ENCODE measurements at regions of chr19 and their contacts with region 1.

Region 1: GRCh38 chr19:5690125-5690954 is at the start of gene RPL36:
- DNase-seq: peak; percentile 98 to 99
- ATAC-seq: peak; percentile 70 to 79 (median 75)
- H3K4me3 ChIP-seq: peak within 1 kb of the TSS; percentile 97
- H3K27ac ChIP-seq: peak within 1 kb of the TSS; percentile 91
- H3K4me1 ChIP-seq: peaks cover 15% of the 10 kb centered on the region
- H3K27me3 ChIP-seq: no peaks in the 10 kb centered on the region
- CTCF ChIP-seq: peak; percentile 93
- total RNA-seq, gene RPL36: 440 to 572 (median 473) TPM

Region 2: GRCh38 chr19:5622463-5623396 is 67.6 kb before region 1 on chr19 and contains the starts of genes SAFB and SAFB2:
- intact Hi-C with region 1: loop called in 1 of 2 experiments (anchors 10 kb)
- DNase-seq: peak; percentile 99 to 100
- ATAC-seq: peak; percentile 94 to 96 (median 96)
- H3K4me3 ChIP-seq: peak within 1 kb of the TSS; percentile 98
- H3K27ac ChIP-seq: peak within 1 kb of the TSS; percentile 89
- H3K4me1 ChIP-seq: peaks cover 73% of the 10 kb centered on the region
- H3K27me3 ChIP-seq: no peaks in the 10 kb centered on the region
- CTCF ChIP-seq: no peak
- total RNA-seq, gene SAFB: 51.3 to 88.9 (median 65.1) TPM
- total RNA-seq, gene SAFB2: 30.4 to 52.9 (median 45.6) TPM

Region 3: DNA sequence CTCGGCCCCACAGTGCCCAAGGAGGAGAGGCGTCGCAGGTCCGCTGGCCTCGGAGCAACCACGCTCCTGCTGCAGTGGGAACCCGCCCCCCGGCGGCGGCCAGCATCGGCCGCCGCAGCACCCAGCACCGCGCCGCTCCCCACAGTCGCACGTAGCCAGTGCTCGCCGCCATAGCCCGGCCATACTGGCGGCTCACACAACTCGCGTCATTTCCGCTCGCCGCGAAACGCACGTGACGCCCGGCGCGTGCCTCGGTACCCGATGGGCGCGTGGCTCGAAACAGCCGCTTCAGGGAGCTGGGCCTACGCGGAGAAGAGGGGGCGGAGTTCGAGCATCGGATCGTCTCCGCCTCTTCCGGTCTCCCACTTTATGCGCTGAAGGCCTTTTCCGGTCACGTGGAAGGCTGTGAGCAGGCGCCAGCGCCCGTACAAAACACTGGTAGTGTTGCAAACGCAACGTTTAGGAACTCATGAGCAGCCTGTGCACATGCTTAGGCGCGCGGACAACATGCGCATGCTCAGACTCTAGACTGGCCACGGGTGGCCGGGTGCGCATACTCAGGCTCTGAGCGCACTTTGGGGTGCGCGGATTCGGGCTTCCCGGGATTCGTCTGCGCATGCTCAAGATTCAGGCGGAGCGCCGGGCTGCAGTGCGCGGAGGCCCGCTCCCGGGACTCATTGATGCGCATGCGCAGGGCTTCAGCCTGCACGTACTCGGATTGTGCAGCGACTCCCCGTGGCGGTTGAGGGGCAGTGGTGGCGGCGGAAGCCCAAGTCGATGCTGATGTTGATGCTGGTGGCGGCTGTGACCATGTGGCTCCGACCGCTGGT is 29.8 kb after region 1 on chr19 and contains the starts of genes CATSPERD and LONP1:
- intact Hi-C with region 1: loop called in 1 of 2 experiments (anchors 2 kb)
- DNase-seq: peak; percentile 99
- ATAC-seq: peak; percentile 96 to 97 (median 96)
- H3K4me3 ChIP-seq: peak within 1 kb of the TSS; percentile 95
- H3K27ac ChIP-seq: peak within 1 kb of the TSS; percentile 99
- H3K4me1 ChIP-seq: peaks cover 20% of the 10 kb centered on the region
- H3K27me3 ChIP-seq: peaks cover 0 to 3% (median 0%) of the 10 kb centered on the region in 3 donors
- CTCF ChIP-seq: peak; percentile 88
- total RNA-seq, gene CATSPERD: not detected
- total RNA-seq, gene LONP1: 61.0 to 97.1 (median 73.8) TPM

Region 4: DNA sequence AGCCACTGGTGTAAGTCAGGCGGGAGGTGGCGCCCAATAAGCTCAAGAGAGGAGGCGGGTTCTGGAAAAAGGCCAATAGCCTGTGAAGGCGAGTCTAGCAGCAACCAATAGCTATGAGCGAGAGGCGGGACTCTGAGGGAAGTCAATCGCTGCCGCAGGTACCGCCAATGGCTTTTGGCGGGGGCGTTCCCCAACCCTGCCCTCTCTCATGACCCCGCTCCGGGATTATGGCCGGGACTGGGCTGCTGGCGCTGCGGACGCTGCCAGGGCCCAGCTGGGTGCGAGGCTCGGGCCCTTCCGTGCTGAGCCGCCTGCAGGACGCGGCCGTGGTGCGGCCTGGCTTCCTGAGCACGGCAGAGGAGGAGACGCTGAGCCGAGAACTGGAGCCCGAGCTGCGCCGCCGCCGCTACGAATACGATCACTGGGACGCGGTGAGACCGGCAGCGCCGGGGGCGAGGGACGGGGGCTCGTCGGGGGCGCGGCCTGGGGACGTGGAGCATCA is 682.3 kb after region 1 on chr19 and contains the start of gene ALKBH7:
- intact Hi-C with region 1: loop called in 1 of 2 experiments (anchors 10 kb)
- DNase-seq: peak; percentile 96 to 98
- ATAC-seq: peak; percentile 87 to 92 (median 89)
- H3K4me3 ChIP-seq: peak within 1 kb of the TSS; percentile 90
- H3K27ac ChIP-seq: peak within 1 kb of the TSS; percentile 98
- H3K4me1 ChIP-seq: no peaks in the 10 kb centered on the region
- H3K27me3 ChIP-seq: no peaks in the 10 kb centered on the region
- CTCF ChIP-seq: no peak
- total RNA-seq, gene ALKBH7: 72.3 to 120 (median 96.8) TPM

Measured in psoas muscle (tissue), 8 donors.